OCI-LY7 (cell line): ENCODE measurements at regions of chr11 and their contacts with region 1.

Region 1: DNA sequence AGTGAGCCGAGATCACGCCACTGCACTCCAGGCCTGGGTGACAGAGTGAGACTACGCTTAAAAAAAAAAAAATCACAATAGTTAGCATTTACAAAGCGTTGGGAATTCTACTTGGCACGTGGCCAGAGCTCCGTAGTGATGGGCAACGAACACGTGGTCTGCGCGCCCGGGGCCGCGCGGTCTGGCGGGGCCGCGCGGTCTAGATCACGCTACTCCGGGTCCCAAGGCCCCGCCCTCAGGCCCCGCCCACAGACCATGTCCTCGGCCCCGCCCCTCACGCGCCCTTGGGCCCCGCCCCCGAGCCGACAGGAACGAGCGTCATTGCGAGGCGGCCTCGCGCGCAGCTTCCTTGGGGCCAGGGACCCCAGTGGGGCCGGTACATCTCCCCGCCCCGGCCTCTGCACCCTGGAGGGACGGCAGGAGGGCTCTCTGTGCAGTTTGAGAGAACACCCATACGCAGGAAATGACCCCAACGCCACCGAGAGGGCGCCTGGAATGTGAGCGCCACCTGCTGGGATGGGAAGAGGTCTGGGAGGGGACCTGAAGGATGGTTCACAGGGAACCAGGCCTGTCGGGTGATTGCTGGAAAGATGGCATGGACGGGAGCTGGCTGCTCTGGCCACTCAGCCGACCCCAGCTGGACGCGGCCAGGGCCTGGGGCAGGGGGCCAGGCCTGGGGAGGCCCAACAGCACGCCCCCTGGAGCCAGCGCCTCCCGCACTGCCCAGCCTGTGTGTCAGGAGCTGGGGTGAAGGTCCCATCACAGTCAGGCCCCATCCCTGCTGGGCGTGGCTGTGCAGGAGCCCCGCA is 2.0 kb upstream of the PTDSS2 start:
- DNase-seq: peak; percentile 96
- H3K4me3 ChIP-seq: peak overlapping the region; percentile 74
- H3K27ac ChIP-seq: peak overlapping the region; percentile 68
- H3K4me1 ChIP-seq: peaks cover 37% of the 10 kb centered on the region
- CTCF ChIP-seq: peak; percentile 86

Region 2: DNA sequence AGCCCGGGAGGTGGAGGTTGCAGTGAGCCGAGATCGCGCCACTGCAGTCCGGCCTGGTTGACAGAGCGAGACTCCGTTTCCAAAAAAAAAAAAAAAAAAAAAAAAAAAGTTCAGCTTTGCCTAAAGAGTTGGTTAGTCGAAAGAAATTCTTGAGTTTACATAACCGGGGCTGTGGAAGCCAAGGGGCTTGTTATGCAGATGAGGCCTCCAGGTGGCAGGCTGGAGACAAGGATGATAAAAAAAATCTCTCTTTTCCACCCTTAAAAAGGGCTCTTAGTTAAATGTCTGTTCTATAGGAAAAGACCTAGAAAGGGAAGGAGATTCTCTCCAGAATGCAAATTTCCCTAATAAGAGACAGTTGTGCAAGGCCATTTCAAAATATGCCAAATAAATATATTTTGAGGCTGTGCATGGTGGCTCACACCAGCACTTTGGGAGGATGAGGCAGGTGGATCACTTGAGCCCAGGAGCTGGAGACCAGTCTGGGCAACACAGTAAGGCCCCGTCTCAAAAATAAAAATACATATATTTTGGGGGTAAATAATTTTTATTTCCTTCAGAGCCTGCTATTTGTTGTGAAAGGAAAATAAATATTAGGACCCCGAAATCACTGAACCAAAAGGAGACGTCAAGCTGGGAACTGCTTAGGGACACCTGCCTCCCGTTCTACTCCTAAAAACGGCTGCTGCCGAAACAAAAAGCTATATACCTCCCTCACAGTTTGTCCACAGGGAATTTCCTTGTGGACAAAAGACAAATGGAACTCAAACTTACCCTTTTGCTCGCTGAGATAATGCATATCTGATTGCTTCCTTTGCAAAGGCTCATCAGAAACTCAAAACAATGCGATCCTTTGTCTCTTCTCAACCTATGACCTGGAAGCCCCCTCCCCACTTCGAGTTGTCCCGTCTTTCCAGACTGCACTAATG is 142.9 kb before region 1 on chr11:
- CTCF ChIA-PET with region 1: no interaction called
- POLR2A ChIA-PET with region 1: no interaction called
- intact Hi-C with region 1: loop called (anchors 1 kb)
- DNase-seq: peak; percentile 80
- H3K4me3 ChIP-seq: no peak overlapping the region
- H3K27ac ChIP-seq: no peak overlapping the region
- H3K4me1 ChIP-seq: peaks cover 31% of the 10 kb centered on the region
- CTCF ChIP-seq: peak; percentile 85

Region 3: GRCh38 chr11:406978-407739 is 41.0 kb before region 1 on chr11:
- CTCF ChIA-PET with region 1: interaction called, 13 read pairs
- POLR2A ChIA-PET with region 1: interaction called, 5 read pairs
- intact Hi-C with region 1: loop called (anchors 1 kb)
- DNase-seq: peak; percentile 94
- H3K4me3 ChIP-seq: peak overlapping the region; percentile 73
- H3K27ac ChIP-seq: peak overlapping the region; percentile 74
- H3K4me1 ChIP-seq: peaks cover 11% of the 10 kb centered on the region
- CTCF ChIP-seq: no peak

Region 4: GRCh38 chr11:518463-519250 is 70.5 kb after region 1 on chr11:
- CTCF ChIA-PET with region 1: no interaction called
- POLR2A ChIA-PET with region 1: no interaction called
- intact Hi-C with region 1: loop called (anchors 1 kb)
- DNase-seq: peak; percentile 80
- H3K4me3 ChIP-seq: peak overlapping the region; percentile 28
- H3K27ac ChIP-seq: no peak overlapping the region
- H3K4me1 ChIP-seq: no peaks in the 10 kb centered on the region
- CTCF ChIP-seq: peak; percentile 99

Region 5: GRCh38 chr11:727859-728748 is 280.0 kb after region 1 on chr11:
- CTCF ChIA-PET with region 1: no interaction called
- POLR2A ChIA-PET with region 1: no interaction called
- intact Hi-C with region 1: loop called (anchors 1 kb)
- DNase-seq: peak; percentile 73
- H3K4me3 ChIP-seq: no peak overlapping the region
- H3K27ac ChIP-seq: no peak overlapping the region
- H3K4me1 ChIP-seq: peaks cover 39% of the 10 kb centered on the region
- CTCF ChIP-seq: peak; percentile 92